ENCODE measurements at regions of chr17 and their contacts with region 1.

Region 1: GRCh38 chr17:76523084-76524037 is 14.1 kb downstream of the CYGB start:
- DNase-seq: peak in 1 of 2 experiments; percentile 83
- H3K4me3 ChIP-seq: no peak overlapping the region
- H3K27ac ChIP-seq: no peak overlapping the region
- H3K4me1 ChIP-seq: no peaks in the 10 kb centered on the region; the same call in 1 of the 2 replicates
- H3K27me3 ChIP-seq: no peaks in the 10 kb centered on the region
- CTCF ChIP-seq: peak; percentile 95

Region 2: DNA sequence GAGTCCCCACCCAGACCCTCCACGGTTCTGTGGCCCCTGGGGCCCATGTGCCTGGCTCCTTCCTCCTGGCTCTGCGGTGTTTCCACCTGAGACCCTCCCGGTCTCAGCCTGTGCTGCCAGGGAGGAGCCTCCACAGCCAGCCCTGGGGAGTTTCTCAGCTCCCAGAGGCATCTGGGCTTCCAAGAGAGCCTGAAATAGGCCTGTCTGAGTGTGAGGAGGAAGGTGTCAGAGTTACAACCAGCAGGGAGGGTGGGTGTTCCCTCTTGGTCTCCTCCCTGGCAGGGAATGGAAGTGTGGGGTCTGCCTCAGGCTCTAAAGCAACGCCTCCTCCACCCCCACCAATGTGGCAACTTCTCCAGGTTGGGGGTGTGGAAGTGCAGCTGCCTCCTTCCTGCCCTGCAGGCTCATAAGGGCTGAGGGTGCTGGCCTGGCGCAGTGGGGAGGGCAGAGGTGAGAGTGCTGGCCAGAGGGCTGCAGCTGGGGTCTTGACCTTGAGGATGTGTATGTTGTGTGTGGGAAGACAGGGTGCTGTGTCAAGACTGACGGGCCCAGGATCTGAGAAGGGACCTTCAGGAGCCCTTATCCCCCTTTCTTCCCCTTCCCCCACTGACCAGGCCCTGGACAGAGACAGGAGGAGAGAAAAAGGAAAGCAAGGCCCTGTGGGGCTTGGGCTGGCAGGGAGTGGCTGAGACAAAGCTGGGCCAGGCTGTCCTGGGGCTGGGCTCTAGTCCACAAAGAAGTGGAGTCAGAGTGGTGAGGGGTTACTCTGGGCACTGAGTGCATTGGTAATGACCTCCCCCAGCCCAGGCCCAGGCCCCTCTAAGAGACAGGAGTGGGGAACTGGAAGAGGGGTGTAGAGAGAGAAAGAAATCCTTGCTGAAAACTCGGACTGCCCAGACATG is 11.7 kb after region 1 on chr17:
- CTCF ChIA-PET with region 1: interaction called, 16 read pairs
- POLR2A ChIA-PET with region 1: no interaction called
- intact Hi-C with region 1: no loop called
- DNase-seq: peak in 1 of 2 experiments; percentile 31
- H3K4me3 ChIP-seq: no peak overlapping the region
- H3K27ac ChIP-seq: no peak overlapping the region
- H3K4me1 ChIP-seq: peaks cover 38% of the 10 kb centered on the region
- H3K27me3 ChIP-seq: no peaks in the 10 kb centered on the region
- CTCF ChIP-seq: no peak

Region 3: GRCh38 chr17:76557368-76558197 is 34.2 kb after region 1 on chr17:
- CTCF ChIA-PET with region 1: interaction called, 9 read pairs
- POLR2A ChIA-PET with region 1: no interaction called
- intact Hi-C with region 1: loop called (anchors 1 kb)
- DNase-seq: peak; percentile 83 to 95
- H3K4me3 ChIP-seq: peak overlapping the region; percentile 97
- H3K27ac ChIP-seq: peak overlapping the region; percentile 85
- H3K4me1 ChIP-seq: peaks cover 27% of the 10 kb centered on the region
- H3K27me3 ChIP-seq: no peaks in the 10 kb centered on the region
- CTCF ChIP-seq: peak; percentile 59

Region 4: DNA sequence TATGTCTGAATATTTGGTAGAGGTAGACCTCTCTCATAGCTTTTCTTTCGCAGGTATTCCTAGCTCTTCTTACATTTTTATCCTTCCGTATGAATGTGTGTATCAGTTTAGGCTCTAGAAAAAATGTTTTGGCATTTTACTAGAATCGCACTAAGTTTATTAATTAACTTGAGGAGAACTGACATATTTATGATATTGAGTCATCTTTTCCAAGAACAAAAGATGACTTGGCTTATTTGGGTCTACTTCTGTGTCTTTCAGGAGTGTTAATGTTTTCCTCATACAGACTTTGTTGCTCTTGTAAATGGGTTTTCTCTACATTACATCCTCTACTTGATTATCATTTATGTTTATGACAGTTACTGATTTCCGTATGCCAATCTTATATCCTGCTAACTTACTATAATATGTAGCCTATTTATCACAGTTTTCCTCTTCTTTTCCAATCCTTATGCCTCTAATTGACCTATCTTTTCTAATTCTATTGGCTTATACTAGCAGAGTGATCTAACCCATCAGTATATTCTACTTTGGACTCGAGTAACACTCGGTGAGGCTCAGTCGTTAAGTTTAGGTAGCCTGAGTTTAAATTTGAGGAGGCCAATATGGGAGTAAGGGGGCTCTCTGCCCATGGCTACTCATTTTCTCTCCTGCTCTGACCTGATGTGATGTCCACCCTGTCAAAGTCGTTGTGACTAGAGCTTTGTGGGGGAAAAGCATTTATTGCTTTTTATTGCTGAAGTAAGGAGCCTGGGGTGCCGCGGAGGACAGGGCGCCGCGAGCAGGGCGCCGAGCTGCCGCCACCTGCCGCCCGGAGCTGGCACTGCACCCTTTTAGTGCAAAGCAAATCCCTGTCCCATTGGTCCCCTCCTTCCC is 100.1 kb after region 1 on chr17:
- CTCF ChIA-PET with region 1: interaction called, 6 read pairs
- POLR2A ChIA-PET with region 1: no interaction called
- intact Hi-C with region 1: loop called (anchors 2 kb)
- DNase-seq: peak in 1 of 2 experiments; percentile 76
- H3K4me3 ChIP-seq: no peak overlapping the region
- H3K27ac ChIP-seq: no peak overlapping the region
- H3K4me1 ChIP-seq: peaks cover 15% of the 10 kb centered on the region
- H3K27me3 ChIP-seq: no peaks in the 10 kb centered on the region
- CTCF ChIP-seq: peak; percentile 83

Region 5: DNA sequence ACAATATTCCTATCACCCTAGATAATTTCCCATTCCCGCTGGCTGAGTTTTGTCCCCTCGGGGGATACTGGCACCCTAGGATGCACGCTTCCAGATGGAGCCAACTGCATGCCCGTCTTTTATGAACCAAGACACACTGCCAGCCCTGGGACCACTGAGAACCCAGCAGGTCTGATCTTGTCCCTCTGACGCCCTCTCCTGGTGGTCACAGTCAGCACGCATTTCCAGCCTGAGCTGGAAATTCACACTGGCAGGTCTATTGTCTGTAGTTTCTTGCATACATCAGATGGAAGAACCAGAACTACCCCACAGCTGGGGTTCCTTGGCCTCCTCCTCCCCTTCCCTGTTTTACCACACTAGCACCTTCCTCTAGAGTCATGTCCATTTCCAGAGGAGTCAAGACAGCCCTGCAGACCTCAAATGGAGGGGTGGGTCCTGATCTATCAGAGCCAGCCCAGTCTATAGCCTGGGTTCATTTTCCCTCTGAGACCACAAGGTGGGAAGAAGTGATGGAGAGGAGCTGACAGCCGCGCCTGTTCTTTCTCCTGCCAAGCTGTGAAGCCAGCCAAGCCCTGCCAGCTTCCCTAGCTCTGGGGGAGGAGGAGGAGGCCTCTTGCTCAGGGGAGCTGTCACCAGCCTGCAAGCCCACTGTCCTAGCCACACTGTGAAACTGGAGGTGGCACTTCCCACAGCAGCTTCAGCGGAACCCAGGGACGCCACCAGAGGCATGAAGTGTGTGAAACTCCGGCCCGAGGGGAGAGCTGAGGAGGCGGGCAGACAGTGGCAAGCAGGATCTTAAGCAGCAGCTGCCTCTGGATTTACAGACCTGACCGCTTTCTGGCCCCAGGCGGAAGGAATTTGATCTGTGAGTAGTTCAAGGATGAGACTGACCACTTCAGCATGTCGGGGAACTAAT is 158.1 kb after region 1 on chr17:
- CTCF ChIA-PET with region 1: interaction called, 11 read pairs
- POLR2A ChIA-PET with region 1: no interaction called
- intact Hi-C with region 1: loop called (anchors 1 kb)
- DNase-seq: peak in 1 of 2 experiments; percentile 70
- H3K4me3 ChIP-seq: no peak overlapping the region
- H3K27ac ChIP-seq: no peak overlapping the region
- H3K4me1 ChIP-seq: no peaks in the 10 kb centered on the region
- H3K27me3 ChIP-seq: no peaks in the 10 kb centered on the region
- CTCF ChIP-seq: peak; percentile 77

Region 6: GRCh38 chr17:76826330-76827068 is 303.1 kb after region 1 on chr17:
- CTCF ChIA-PET with region 1: no interaction called
- POLR2A ChIA-PET with region 1: no interaction called
- intact Hi-C with region 1: no loop called
- DNase-seq: no peak
- H3K4me3 ChIP-seq: no peak overlapping the region
- H3K27ac ChIP-seq: no peak overlapping the region
- H3K4me1 ChIP-seq: no peaks in the 10 kb centered on the region
- H3K27me3 ChIP-seq: no peaks in the 10 kb centered on the region
- CTCF ChIP-seq: no peak